Heart left ventricle (tissue), 16 donors: ENCODE measurements at regions of chr14 and their contacts with region 1.

Region 1: DNA sequence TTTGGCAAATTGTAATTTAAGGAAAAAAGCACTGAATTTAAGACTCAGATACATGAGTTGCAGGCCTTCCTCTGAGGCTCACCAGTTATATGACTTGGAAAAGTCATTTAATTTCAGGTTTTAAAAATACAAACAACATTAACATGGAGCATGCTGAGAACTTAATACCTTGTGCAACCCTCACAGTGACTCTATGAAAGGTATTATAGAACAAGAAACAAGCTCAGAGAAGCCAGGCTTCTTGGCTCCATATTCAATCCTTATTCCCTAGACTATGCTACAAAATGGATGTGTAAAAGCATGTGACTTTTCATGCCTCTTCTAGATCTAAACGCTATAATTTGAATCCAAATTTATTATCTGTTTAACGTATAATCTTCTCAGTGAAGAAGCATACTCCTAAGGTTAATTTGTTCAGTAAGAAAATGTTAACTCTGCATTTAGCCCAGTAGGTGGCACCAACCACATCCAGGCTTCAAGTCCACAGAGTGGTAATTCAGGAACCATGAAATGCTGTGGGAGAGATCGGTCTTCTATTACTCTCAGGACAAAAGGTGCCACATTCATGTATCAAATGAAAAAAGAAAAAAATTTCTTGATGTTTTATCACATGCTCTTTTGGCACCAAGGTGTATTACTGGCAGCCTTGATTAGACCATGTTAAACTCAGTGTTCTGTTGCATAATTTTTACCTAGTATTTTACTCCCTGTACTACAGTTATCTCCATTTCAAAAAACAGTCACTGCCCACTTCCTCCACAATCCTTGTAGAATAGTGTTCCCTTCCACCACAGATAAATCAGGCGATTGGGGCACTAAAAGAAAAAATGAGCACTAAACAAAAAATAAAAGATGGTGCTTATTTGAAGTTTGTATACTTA is 9.3 kb downstream of the CCDC196 start:
- DNase-seq: peak in 4 of 5 donors; percentile 30 to 39 (median 34)
- ATAC-seq: peak; percentile 66 to 95 (median 89)
- H3K4me3 ChIP-seq: peak overlapping the region in 5 of 12 donors; percentile 13 to 33 (median 28)
- H3K27ac ChIP-seq: no peak overlapping the region
- H3K4me1 ChIP-seq: peaks cover 0 to 20% (median 3%) of the 10 kb centered on the region in 12 donors
- H3K27me3 ChIP-seq: no peaks in the 10 kb centered on the region
- CTCF ChIP-seq: peak; percentile 65 to 90 (median 80)
- POLR2A ChIP-seq: no peak

Region 2: GRCh38 chr14:66403183-66403582 is 92.3 kb before region 1 on chr14:
- intact Hi-C with region 1: loop called in 4 of 10 experiments (anchors 5 to 10 kb)
- DNase-seq: no peak
- ATAC-seq: peak in 3 of 4 donors; percentile 37 to 50 (median 50)
- H3K4me3 ChIP-seq: no peak overlapping the region
- H3K27ac ChIP-seq: no peak overlapping the region
- H3K4me1 ChIP-seq: peaks cover 0 to 9% (median 0%) of the 10 kb centered on the region in 12 donors
- H3K27me3 ChIP-seq: no peaks in the 10 kb centered on the region
- CTCF ChIP-seq: peak in 9 of 12 donors; percentile 18 to 50 (median 46)
- POLR2A ChIP-seq: no peak

Region 3: DNA sequence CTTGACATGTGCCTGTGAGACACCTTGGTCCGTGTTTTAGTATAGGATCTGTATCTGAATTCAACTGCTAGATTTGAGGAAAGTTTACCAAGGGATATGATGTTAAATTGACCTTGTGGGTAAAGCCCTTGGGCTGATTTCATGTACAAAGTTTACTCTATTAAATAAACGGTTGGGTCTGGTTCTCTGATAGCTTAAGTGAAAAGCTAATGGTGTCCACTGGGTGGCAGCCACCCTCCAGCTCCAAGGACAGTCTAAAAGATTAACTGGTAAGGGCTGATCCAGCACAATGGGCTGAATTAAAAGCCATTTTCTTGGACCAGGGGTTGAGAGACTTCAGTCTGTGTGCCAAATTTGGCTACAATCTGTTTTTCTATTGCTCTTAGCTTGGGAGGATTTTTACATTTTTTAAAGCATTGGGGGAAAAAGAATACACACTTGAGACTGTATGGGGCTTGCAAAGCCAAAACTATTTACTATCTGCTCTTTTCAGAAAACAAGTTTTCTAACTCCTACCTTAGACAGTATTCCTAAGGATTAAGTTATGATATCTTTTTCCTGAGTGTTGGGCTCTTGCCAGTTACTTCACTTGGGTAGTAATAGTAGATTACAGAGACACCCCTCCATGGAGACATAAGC is 129.0 kb after region 1 on chr14:
- intact Hi-C with region 1: loop called in 2 of 10 experiments (anchors 5 kb)
- DNase-seq: peak; percentile 33 to 68 (median 44)
- ATAC-seq: peak; percentile 80 to 95 (median 91)
- H3K4me3 ChIP-seq: no peak overlapping the region
- H3K27ac ChIP-seq: peak overlapping the region in 1 of 12 donors; percentile 23
- H3K4me1 ChIP-seq: peaks cover 0 to 16% (median 6%) of the 10 kb centered on the region in 12 donors
- H3K27me3 ChIP-seq: no peaks in the 10 kb centered on the region
- CTCF ChIP-seq: peak; percentile 56 to 80 (median 68)
- POLR2A ChIP-seq: no peak

Region 4: DNA sequence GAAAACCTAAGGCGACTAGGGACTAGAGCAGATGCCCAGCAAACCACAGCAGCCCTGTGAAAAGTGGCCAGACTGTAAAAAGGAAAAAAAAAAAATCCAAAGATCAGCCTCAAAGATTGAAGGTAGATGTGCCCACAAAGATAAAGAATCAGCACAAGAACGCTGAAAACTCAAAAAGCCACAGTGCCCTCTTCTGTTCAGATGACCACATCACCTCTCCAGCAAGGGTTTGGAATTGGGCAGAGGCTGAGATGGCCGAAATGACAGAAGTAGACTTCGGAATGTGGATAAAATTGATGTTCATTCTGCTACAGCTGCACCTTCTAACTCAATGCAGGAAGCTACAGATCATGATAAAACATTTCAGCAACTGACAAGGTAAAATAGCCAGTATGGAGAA is 166.9 kb after region 1 on chr14:
- intact Hi-C with region 1: loop called in 5 of 10 experiments (anchors 5 to 10 kb)
- DNase-seq: no peak
- ATAC-seq: no peak
- H3K4me3 ChIP-seq: no peak overlapping the region
- H3K27ac ChIP-seq: no peak overlapping the region
- H3K4me1 ChIP-seq: no peaks in the 10 kb centered on the region
- H3K27me3 ChIP-seq: no peaks in the 10 kb centered on the region
- CTCF ChIP-seq: peak in 9 of 12 donors; percentile 20 to 53 (median 36)
- POLR2A ChIP-seq: no peak

Region 5: DNA sequence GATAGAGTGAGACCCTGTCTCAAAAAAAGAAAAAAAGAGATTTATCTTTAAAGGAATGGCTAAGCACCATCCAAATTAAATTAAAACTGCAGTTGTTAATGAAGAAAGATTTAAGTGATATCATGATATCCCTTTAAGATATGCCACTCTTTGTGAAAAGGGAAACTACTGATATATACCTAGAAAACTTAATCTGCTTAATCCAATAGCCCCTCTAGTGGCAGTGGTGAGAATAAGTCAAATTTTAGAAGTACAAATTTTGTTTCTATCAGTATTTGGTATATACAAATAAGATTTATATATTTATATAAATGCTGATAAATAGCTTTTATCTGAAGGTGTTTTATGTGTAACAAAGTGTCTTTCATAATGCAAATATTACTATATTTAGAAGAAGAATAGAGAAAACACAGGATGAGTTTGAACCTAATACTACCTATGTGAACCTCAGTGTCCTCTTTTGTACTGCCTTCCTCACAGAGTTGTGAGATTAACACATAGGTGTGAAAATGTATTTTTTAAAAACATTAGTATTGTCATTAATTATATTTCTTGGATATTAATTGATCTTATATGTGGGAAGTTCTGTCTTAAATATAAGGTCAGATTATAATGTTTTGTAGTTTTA is 642.4 kb after region 1 on chr14:
- intact Hi-C with region 1: loop called in 1 of 10 experiments (anchors 10 kb)
- DNase-seq: no peak
- ATAC-seq: no peak
- H3K4me3 ChIP-seq: no peak overlapping the region
- H3K27ac ChIP-seq: no peak overlapping the region
- H3K4me1 ChIP-seq: no peaks in the 10 kb centered on the region
- H3K27me3 ChIP-seq: no peaks in the 10 kb centered on the region
- CTCF ChIP-seq: peak in 11 of 12 donors; percentile 12 to 44 (median 35)
- POLR2A ChIP-seq: no peak